HEK293 (cell line): ENCODE measurements at regions of chr19 and their contacts with region 1.

Region 1: DNA sequence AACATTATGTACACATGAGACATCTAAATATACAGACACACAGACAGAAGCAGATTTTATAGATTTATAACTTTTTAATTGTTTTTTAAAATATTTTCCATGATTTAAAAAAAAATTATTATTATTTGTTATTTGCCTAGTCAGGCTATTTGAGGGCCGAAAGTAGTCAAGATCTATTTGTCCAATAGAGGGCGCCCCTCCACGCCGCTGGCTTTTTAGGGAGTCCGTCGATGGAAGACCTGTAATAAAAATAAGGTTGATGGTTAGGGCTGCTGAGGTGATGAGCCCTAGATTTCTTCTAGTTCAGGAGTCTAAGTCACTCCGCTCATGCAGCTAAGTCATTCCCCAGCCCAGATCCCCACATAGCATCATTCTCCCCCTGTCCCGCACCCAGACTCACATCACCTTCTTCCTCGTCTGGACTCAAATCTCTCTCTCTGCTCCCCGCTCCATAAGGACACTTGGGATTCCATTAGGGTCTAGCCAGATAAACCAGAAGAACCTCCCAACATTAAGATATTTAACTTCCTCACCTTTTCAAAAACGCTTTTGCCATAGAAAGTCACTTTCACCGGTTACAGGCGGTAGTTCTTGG is 33.9 kb upstream of the CEACAM21 start:
- H3K4me3 ChIP-seq: no peak overlapping the region
- H3K27ac ChIP-seq: no peak overlapping the region
- H3K4me1 ChIP-seq: no peaks in the 10 kb centered on the region
- CTCF ChIP-seq: 0 out of 2 replicates have a peak, but pooled peaks have one; percentile 25

Region 2: DNA sequence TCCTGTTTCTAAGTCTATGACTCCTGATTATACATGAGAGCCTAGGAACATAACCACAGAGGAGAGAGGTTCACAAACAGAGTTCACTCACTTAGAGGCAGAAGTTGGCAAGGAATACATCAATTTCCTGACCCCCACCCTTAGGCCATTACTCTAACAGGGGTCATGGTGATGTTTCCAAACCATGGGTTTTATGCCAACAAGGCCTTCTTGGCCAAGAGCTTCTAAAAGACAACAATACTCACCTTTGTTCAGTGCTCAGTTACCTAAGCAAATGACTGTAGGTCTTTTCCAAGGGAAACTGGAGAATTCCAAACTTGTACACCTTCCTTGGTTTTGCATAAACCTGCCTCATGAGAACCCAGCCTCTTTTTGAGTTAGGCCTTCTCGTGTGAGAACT is 46.5 kb before region 1 on chr19:
- CTCF ChIA-PET with region 1: no interaction called
- POLR2A ChIA-PET with region 1: no interaction called
- H3K4me3 ChIP-seq: no peak overlapping the region
- H3K27ac ChIP-seq: no peak overlapping the region
- H3K4me1 ChIP-seq: peaks cover 2% of the 10 kb centered on the region
- CTCF ChIP-seq: no peak

Region 3: DNA sequence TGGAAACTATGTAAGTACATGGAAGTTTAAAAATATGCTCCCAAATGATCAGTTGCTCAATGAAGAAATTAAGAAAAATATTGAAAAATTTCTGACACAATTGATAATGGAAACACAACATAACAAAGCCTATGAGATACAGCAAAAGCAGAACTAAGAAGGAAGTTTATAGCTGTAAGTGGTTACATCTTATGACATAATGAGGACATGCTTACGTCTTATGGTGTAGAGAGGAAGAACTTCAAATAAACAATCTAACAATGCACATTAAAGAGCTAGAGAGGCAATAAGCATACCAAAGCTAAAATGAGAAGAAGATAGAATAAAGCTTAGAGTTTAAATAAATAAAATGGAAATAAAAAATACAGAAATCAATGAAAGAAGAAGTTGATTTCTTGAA is 16.1 kb before region 1 on chr19:
- CTCF ChIA-PET with region 1: interaction called, 15 read pairs
- POLR2A ChIA-PET with region 1: interaction called, 7 read pairs
- H3K4me3 ChIP-seq: no peak overlapping the region
- H3K27ac ChIP-seq: no peak overlapping the region
- H3K4me1 ChIP-seq: peaks cover 6% of the 10 kb centered on the region; the same call in 1 of the 2 replicates
- CTCF ChIP-seq: no peak

Region 4: DNA sequence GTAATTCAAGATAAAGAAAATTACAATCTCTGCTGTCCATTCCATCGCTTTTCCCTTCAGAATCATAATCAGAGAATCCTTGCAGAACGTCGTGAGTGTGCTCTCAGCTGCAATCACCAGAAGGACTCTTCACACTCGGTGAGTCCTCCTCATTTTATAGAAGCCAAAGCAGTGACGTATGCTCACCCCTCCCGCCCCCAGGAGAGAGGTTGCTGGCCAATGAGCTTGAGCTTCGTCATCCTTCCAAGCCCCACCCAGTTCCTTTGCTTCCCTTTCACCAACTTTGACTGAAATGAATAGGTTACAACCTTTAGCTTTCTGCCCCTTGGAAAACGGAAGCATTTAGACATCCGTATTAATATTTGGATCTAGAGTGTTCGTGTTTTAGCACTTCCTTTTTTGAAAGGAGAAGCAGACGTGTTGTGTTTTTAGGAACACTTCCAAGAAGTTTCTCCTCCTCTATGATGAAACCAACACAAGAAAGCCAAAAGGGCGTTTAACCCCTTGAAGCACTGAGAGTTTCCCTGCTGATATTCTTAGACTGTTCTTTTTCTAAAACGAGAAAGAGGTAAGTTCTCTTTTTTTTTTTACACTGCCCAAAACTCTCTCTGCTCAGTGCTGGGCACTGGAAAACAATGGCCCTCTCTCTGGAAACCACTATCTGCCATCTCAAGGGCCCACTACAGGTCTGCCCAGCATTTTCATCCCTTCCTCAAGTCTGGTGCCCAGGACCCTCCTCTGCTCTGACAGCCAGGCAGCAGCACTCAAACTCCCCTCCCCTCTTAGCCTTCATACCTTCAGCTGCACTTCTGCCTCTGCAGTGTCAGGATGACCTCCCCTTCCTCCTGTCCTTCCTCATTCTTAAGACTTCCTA is 10.4 kb before region 1 on chr19:
- CTCF ChIA-PET with region 1: interaction called, 15 read pairs
- POLR2A ChIA-PET with region 1: interaction called, 7 read pairs
- H3K4me3 ChIP-seq: no peak overlapping the region
- H3K27ac ChIP-seq: peak overlapping the region; percentile 1; the same call in 1 of the 2 replicates
- H3K4me1 ChIP-seq: peaks cover 7% of the 10 kb centered on the region
- CTCF ChIP-seq: no peak

Region 5: DNA sequence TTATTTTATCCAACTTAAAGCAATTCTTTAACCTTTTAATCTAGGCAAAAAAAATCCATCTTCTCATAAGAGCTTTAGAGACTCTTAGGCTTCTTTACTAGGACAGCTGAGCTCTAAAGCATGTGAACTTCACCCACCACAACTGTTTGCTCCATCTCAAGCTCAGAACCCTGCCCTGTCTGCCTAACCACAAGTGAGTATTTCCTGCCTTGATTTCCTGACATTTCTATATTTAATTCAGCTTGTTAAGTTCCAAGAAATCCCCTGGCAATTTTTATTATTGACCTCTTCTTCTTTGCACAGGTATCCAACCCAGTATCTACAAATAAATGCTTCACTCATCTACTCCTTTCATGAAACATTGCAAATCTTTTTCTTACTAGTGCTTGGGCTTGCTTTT is 12.8 kb after region 1 on chr19:
- CTCF ChIA-PET with region 1: interaction called, 22 read pairs
- POLR2A ChIA-PET with region 1: no interaction called
- H3K4me3 ChIP-seq: no peak overlapping the region
- H3K27ac ChIP-seq: no peak overlapping the region
- H3K4me1 ChIP-seq: peaks cover 2% of the 10 kb centered on the region; the same call in 1 of the 2 replicates
- CTCF ChIP-seq: no peak

Region 6: GRCh38 chr19:41837981-41838708 is 296.1 kb after region 1 on chr19:
- CTCF ChIA-PET with region 1: no interaction called
- POLR2A ChIA-PET with region 1: no interaction called
- H3K4me3 ChIP-seq: no peak overlapping the region
- H3K27ac ChIP-seq: no peak overlapping the region
- H3K4me1 ChIP-seq: no peaks in the 10 kb centered on the region
- CTCF ChIP-seq: no peak